T-cell (primary cell): ENCODE measurements at regions of chr9 and their contacts with region 1.

Region 1: GRCh38 chr9:7324152-7324598 is 475.4 kb downstream of the DMAC1 start:
- DNase-seq: no peak
- ATAC-seq: no peak
- H3K4me3 ChIP-seq: no peak overlapping the region
- H3K4me3 Mint-ChIP-seq: no peak overlapping the region
- H3K27ac ChIP-seq: no peak overlapping the region
- H3K27ac Mint-ChIP-seq: no peak overlapping the region
- H3K4me1 ChIP-seq: no peaks in the 10 kb centered on the region
- H3K4me1 Mint-ChIP-seq: no peaks in the 10 kb centered on the region
- H3K27me3 ChIP-seq: no peaks in the 10 kb centered on the region
- H3K27me3 Mint-ChIP-seq: peaks cover under 1 to 10% of the 10 kb centered on the region in 2 donors

Region 2: GRCh38 chr9:7223981-7224380 is 100.2 kb before region 1 on chr9:
- CTCF ChIA-PET with region 1: no interaction called
- POLR2A ChIA-PET with region 1: no interaction called
- DNase-seq: no peak
- ATAC-seq: no peak
- H3K4me3 ChIP-seq: no peak overlapping the region
- H3K4me3 Mint-ChIP-seq: no peak overlapping the region
- H3K27ac ChIP-seq: no peak overlapping the region
- H3K27ac Mint-ChIP-seq: no peak overlapping the region
- H3K4me1 ChIP-seq: peaks cover 0 to 4% of the 10 kb centered on the region in 2 experiments
- H3K4me1 Mint-ChIP-seq: peaks cover 9 to 25% (median 17%) of the 10 kb centered on the region in 3 donors
- H3K27me3 ChIP-seq: no peaks in the 10 kb centered on the region
- H3K27me3 Mint-ChIP-seq: peaks cover under 1 to 4% of the 10 kb centered on the region in 2 donors

Region 3: DNA sequence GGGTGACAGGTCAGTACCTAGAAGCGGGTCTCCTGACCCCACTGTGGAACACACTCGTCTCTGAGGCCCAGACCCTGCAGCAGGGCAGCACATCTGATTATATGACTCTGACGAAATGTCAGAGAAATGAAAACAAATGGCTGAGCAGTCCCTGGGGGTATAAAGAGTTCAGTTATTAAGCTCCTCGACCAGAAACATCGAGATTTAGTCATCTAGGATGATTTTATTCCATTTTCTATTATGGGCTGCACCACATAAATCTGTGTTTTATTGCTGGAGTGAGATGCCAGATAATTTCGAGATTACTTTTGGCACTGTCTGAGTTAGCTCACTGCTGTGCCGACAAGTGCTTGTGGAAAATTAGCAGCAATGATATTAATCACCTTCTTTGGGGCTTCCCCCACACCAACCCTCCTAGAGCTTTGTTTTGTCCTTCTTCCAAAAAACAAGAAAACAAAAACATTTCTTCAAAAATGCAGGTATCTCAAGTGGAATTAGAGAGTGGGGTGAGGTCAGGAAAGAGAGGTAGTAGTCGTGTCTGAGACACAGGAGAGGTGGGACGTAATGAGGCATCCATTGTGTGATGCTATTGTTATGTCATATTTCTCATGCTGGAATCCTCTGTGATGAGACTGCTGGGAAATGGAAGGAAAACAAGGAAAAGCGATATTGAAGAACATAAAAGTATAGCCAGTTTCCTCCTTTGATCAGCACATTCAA is 20.1 kb before region 1 on chr9:
- CTCF ChIA-PET with region 1: no interaction called
- POLR2A ChIA-PET with region 1: interaction called in 1 of 2 experiments, 10 read pairs
- DNase-seq: no peak
- ATAC-seq: no peak
- H3K4me3 ChIP-seq: no peak overlapping the region
- H3K4me3 Mint-ChIP-seq: no peak overlapping the region
- H3K27ac ChIP-seq: no peak overlapping the region
- H3K27ac Mint-ChIP-seq: no peak overlapping the region
- H3K4me1 ChIP-seq: no peaks in the 10 kb centered on the region
- H3K4me1 Mint-ChIP-seq: no peaks in the 10 kb centered on the region
- H3K27me3 ChIP-seq: no peaks in the 10 kb centered on the region
- H3K27me3 Mint-ChIP-seq: peaks cover 16 to 22% of the 10 kb centered on the region in 2 donors

Region 4: GRCh38 chr9:7342229-7342628 is 18.1 kb after region 1 on chr9:
- CTCF ChIA-PET with region 1: no interaction called
- POLR2A ChIA-PET with region 1: no interaction called
- DNase-seq: no peak
- ATAC-seq: no peak
- H3K4me3 ChIP-seq: no peak overlapping the region
- H3K4me3 Mint-ChIP-seq: no peak overlapping the region
- H3K27ac ChIP-seq: no peak overlapping the region
- H3K27ac Mint-ChIP-seq: no peak overlapping the region
- H3K4me1 ChIP-seq: no peaks in the 10 kb centered on the region
- H3K4me1 Mint-ChIP-seq: no peaks in the 10 kb centered on the region
- H3K27me3 ChIP-seq: no peaks in the 10 kb centered on the region
- H3K27me3 Mint-ChIP-seq: peaks cover 11 to 21% of the 10 kb centered on the region in 2 donors